Ascending aorta (tissue), 2 donors: ENCODE measurements at regions of chr9 and their contacts with region 1.

Region 1: GRCh38 chr9:129783516-129784361 is 19.2 kb upstream of the TOR1B start:
- DNase-seq: peak in 1 of 2 donors; percentile 89
- H3K4me3 ChIP-seq: no peak overlapping the region
- H3K27ac ChIP-seq: no peak overlapping the region
- H3K4me1 ChIP-seq: no peaks in the 10 kb centered on the region
- H3K27me3 ChIP-seq: no peaks in the 10 kb centered on the region
- CTCF ChIP-seq: peak; percentile 84 to 92 (median 92)

Region 2: GRCh38 chr9:129131300-129132145 is 652.2 kb before region 1 on chr9:
- intact Hi-C with region 1: loop called (anchors 5 kb)
- DNase-seq: peak in 1 of 2 donors; percentile 87
- H3K4me3 ChIP-seq: no peak overlapping the region
- H3K27ac ChIP-seq: peak overlapping the region in 1 of 2 donors; percentile 1
- H3K4me1 ChIP-seq: peaks cover 0 to 2% of the 10 kb centered on the region in 2 donors
- H3K27me3 ChIP-seq: no peaks in the 10 kb centered on the region
- CTCF ChIP-seq: peak; percentile 98 to 99 (median 99)

Region 3: DNA sequence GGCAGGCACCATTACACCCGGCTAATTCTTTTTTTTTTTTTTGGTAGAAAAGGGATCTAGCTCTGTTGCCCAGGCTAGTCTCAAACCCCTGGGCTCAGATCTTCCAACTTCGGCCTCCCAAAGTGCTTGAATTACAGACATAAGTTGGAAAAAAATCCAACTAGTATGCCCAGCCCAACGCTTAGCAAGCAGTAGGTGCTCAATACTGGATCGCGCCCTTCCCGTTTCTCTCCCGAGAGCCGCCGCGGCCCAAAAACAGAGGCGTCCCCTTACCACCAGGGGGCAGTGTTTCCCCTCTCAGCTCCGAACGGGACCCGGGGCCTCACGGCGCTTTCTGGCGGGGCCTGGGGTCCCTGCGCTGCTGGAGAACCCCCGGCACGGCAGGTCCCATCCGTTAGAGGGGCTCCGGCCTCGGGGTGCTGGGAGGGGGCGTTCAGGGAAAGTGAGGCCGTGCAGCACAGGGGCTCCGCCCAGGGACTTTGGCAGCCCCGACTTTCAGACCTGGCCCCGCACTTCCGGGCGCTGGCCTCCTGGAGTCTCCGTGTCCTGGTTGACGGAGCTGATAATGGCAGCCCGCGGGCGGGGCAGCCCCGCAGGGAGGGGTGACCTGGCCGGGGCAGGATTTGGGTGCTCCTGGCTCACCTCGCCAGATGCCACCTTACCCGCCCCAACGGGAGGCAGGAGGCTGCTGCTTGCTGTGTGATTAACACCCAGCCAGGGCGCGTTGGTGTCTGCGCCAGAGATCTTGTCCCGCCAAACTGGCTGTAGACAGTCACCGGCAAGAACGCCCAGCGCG is 46.1 kb before region 1 on chr9:
- intact Hi-C with region 1: loop called (anchors 1 kb)
- DNase-seq: peak in 1 of 2 donors; percentile 92
- H3K4me3 ChIP-seq: peak overlapping the region; percentile 49 to 82
- H3K27ac ChIP-seq: peak overlapping the region; percentile 47 to 68
- H3K4me1 ChIP-seq: no peaks in the 10 kb centered on the region
- H3K27me3 ChIP-seq: no peaks in the 10 kb centered on the region
- CTCF ChIP-seq: peak; percentile 95 to 97 (median 97)